ENCODE measurements at regions of chr1 and their contacts with region 1.

Region 1: GRCh38 chr1:23098463-23099170 is 70.0 kb downstream of the LUZP1 start:
- DNase-seq: peak in 1 of 2 donors; percentile 44
- ATAC-seq: peak; percentile 46

Region 2: GRCh38 chr1:22763487-22764200 is 335.0 kb before region 1 on chr1:
- intact Hi-C with region 1: no loop called
- DNase-seq: no peak
- ATAC-seq: peak; percentile 40

Region 3: DNA sequence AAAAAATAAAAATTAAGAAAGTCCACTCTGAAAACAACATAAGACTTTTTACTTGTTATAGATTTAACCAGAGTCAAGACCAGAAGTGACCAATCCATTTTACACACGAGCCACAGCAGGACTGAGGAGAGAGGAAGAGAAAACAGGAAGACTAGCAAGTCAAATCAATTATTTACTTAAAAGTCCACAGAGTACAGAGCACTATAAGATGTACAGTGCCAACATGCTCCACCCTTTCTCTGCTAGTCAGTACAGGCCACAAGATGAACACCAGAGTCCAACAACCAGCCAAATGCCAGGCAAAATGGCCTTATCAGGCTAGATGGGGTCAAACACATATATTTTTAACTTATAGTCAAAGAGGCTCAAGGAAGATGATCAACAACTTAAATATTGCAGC is 50.5 kb after region 1 on chr1:
- intact Hi-C with region 1: no loop called
- DNase-seq: peak; percentile 34 to 53
- ATAC-seq: peak; percentile 97

Region 4: GRCh38 chr1:23184212-23184934 is 85.8 kb after region 1 on chr1:
- intact Hi-C with region 1: loop called (anchors 2 to 5 kb)
- DNase-seq: peak in 1 of 2 donors; percentile 27
- ATAC-seq: no peak

Measured in left colon (tissue), 2 donors.